ENCODE measurements at regions of chr1 and their contacts with region 1.

Region 1: GRCh38 chr1:39666772-39667171 is 5.1 kb downstream of the NT5C1A start:
- DNase-seq: no peak
- H3K4me3 ChIP-seq: no peak overlapping the region
- H3K27ac ChIP-seq: no peak overlapping the region
- H3K4me1 ChIP-seq: no peaks in the 10 kb centered on the region
- H3K27me3 ChIP-seq: no peaks in the 10 kb centered on the region
- CTCF ChIP-seq: no peak
- EP300 ChIP-seq: no peak
- POLR2A ChIP-seq: no peak

Region 2: GRCh38 chr1:39711104-39711965 is 44.6 kb after region 1 on chr1:
- intact Hi-C with region 1: loop called in 1 of 4 experiments (anchors 10 kb)
- DNase-seq: no peak
- H3K4me3 ChIP-seq: no peak overlapping the region
- H3K27ac ChIP-seq: no peak overlapping the region
- H3K4me1 ChIP-seq: no peaks in the 10 kb centered on the region
- H3K27me3 ChIP-seq: no peaks in the 10 kb centered on the region
- CTCF ChIP-seq: no peak
- EP300 ChIP-seq: no peak
- POLR2A ChIP-seq: no peak

Region 3: GRCh38 chr1:39755965-39756659 is 89.3 kb after region 1 on chr1:
- intact Hi-C with region 1: no loop called
- DNase-seq: no peak
- H3K4me3 ChIP-seq: no peak overlapping the region
- H3K27ac ChIP-seq: no peak overlapping the region
- H3K4me1 ChIP-seq: no peaks in the 10 kb centered on the region
- H3K27me3 ChIP-seq: no peaks in the 10 kb centered on the region
- CTCF ChIP-seq: no peak
- EP300 ChIP-seq: no peak
- POLR2A ChIP-seq: no peak

Region 4: GRCh38 chr1:40132383-40133311 is 465.9 kb after region 1 on chr1:
- intact Hi-C with region 1: no loop called
- DNase-seq: peak in 1 of 5 donors; percentile 31
- H3K4me3 ChIP-seq: no peak overlapping the region
- H3K27ac ChIP-seq: no peak overlapping the region
- H3K4me1 ChIP-seq: peaks cover 4% of the 10 kb centered on the region
- H3K27me3 ChIP-seq: no peaks in the 10 kb centered on the region
- CTCF ChIP-seq: no peak
- EP300 ChIP-seq: no peak
- POLR2A ChIP-seq: no peak

Measured in ovary (tissue), 10 donors.